ENCODE measurements at regions of chr14 and their contacts with region 1.

Region 1: GRCh38 chr14:22668417-22668816 is 24.3 kb upstream of the OR6J1 start:
- DNase-seq: no peak
- ATAC-seq: no peak
- H3K4me3 ChIP-seq: no peak overlapping the region
- H3K27ac ChIP-seq: no peak overlapping the region
- H3K4me1 ChIP-seq: no peaks in the 10 kb centered on the region
- H3K27me3 ChIP-seq: no peaks in the 10 kb centered on the region
- CTCF ChIP-seq: no peak

Region 2: DNA sequence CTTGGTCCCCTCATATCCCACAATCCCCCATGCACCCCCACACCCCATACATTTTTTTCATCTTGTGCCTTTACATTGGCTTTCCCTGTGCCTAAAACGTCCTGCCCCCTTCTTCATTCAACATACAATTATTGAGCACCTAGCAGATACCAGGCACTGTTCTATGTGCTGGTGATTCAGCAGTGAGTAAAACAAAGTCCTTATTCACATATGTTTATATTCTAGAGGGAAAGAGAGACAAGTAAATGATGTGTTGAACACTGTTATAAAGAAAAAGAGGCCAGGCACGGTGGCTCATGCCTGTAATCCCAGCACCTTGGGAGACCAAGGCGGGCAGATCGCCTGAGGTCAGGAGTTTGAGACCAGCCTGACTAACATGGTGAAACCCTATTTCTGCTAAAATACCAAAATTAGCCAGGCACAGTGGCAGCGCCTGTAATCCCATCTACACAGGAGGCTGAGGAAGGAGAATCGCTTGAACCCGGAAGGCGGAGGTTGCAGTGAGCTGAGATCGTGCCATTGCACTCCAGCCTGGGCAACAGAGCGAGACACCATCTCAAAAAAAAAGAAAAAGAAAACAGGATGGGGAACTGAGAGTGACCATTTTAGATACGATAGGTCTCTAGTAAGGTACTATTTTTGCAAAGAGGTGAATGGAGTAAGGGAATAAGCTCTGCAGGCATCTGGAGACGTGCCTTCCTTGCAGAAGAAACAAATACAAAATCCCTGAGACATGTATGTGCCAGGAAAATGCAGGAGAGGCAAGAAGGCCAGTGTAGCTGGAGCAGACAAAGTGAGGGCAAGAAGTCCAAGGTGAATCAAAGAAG is 134.7 kb after region 1 on chr14:
- CTCF ChIA-PET with region 1: interaction called, 13 read pairs
- POLR2A ChIA-PET with region 1: no interaction called
- in situ Hi-C with region 1: no loop called
- intact Hi-C with region 1: no loop called
- DNase-seq: no peak
- ATAC-seq: no peak
- H3K4me3 ChIP-seq: no peak overlapping the region
- H3K27ac ChIP-seq: no peak overlapping the region
- H3K4me1 ChIP-seq: no peaks in the 10 kb centered on the region
- H3K27me3 ChIP-seq: no peaks in the 10 kb centered on the region; the same call in 1 of the 2 replicates
- CTCF ChIP-seq: no peak

Measured in Panc1 (cell line).